OCI-LY7 (cell line): ENCODE measurements at regions of chr1 and their contacts with region 1.

Region 1: GRCh38 chr1:113072757-113073478 is at the start of gene LRIG2:
- DNase-seq: peak; percentile 97
- H3K4me3 ChIP-seq: peak within 1 kb of the TSS; percentile 87
- H3K27ac ChIP-seq: peak within 1 kb of the TSS; percentile 74
- H3K4me1 ChIP-seq: peaks cover 27% of the 10 kb centered on the region
- CTCF ChIP-seq: peak; percentile 97; the same call in 1 of the 2 replicates
- total RNA-seq, gene LRIG2: 11.6 and 11.9 TPM in 2 replicates

Region 2: GRCh38 chr1:112715264-112716053 is 357.5 kb before region 1 on chr1 and contains the start of gene PPM1J:
- CTCF ChIA-PET with region 1: interaction called, 3 read pairs
- POLR2A ChIA-PET with region 1: no interaction called
- intact Hi-C with region 1: loop called (anchors 2 kb)
- DNase-seq: peak; percentile 94
- H3K4me3 ChIP-seq: peak within 1 kb of the TSS; percentile 78
- H3K27ac ChIP-seq: no peak within 1 kb of the TSS
- H3K4me1 ChIP-seq: peaks cover 20% of the 10 kb centered on the region
- CTCF ChIP-seq: no peak
- total RNA-seq, gene PPM1J: 1.4 and 1.5 TPM in 2 replicates

Region 3: DNA sequence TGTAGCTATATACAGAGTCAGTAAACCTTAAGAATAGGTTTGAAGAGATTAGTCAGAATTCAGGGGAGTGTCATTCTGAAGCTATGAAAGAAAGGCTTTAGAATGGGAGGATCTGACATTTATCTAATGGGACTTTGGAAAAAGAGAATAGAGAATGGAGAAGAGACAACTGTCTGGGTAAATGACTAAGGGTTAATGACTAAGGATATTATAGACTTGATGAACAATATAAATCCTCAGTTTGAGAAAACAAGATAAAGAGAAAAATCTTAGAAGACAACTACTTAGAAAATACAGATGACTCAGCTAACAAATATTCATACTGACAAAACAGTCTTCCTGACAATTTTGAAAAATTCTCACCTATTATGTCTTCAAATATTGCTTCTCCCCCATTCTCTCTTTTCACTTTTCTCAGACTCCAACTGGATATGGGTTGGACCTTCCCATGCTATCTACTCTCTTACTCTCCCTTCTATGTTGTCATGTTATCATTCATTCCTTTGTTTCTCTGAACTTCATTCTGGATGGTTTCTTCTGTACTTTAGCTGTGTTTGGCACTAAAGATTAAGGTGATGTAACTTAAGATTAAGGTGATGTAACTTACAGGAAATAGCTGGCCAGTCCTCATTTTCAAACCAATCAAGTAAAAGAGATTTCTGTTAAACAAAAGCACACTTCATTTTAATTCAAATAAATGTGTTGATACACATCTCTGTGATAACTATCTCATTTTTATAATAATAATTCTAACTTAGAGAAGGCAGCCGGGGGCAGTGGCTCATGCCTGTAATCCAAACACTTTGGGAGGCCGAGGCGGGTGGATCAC is 137.2 kb before region 1 on chr1:
- CTCF ChIA-PET with region 1: interaction called, 3 read pairs
- POLR2A ChIA-PET with region 1: interaction called, 11 read pairs
- intact Hi-C with region 1: no loop called
- DNase-seq: peak; percentile 22
- H3K4me3 ChIP-seq: no peak overlapping the region
- H3K27ac ChIP-seq: peak overlapping the region; percentile 43
- H3K4me1 ChIP-seq: peaks cover 40% of the 10 kb centered on the region
- CTCF ChIP-seq: no peak

Region 4: GRCh38 chr1:113057006-113057405 is 15.9 kb before region 1 on chr1:
- CTCF ChIA-PET with region 1: interaction called, 12 read pairs
- POLR2A ChIA-PET with region 1: interaction called, 9 read pairs
- intact Hi-C with region 1: no loop called
- DNase-seq: peak; percentile 43
- H3K4me3 ChIP-seq: no peak overlapping the region
- H3K27ac ChIP-seq: no peak overlapping the region
- H3K4me1 ChIP-seq: peaks cover 11% of the 10 kb centered on the region
- CTCF ChIP-seq: no peak